ENCODE measurements at regions of chr3 and their contacts with region 1.

Region 1: GRCh38 chr3:10164546-10165393 is at the start of gene IRAK2:
- DNase-seq: peak in 1 of 2 donors; percentile 88
- H3K4me3 ChIP-seq: peak within 1 kb of the TSS; percentile 86 to 91
- H3K27ac ChIP-seq: peak within 1 kb of the TSS; percentile 90 to 93
- H3K4me1 ChIP-seq: peaks cover 2 to 3% of the 10 kb centered on the region in 2 donors
- H3K27me3 ChIP-seq: no peaks in the 10 kb centered on the region
- CTCF ChIP-seq: peak; percentile 93 to 98 (median 95)
- total RNA-seq, gene IRAK2: 1.3 TPM

Region 2: DNA sequence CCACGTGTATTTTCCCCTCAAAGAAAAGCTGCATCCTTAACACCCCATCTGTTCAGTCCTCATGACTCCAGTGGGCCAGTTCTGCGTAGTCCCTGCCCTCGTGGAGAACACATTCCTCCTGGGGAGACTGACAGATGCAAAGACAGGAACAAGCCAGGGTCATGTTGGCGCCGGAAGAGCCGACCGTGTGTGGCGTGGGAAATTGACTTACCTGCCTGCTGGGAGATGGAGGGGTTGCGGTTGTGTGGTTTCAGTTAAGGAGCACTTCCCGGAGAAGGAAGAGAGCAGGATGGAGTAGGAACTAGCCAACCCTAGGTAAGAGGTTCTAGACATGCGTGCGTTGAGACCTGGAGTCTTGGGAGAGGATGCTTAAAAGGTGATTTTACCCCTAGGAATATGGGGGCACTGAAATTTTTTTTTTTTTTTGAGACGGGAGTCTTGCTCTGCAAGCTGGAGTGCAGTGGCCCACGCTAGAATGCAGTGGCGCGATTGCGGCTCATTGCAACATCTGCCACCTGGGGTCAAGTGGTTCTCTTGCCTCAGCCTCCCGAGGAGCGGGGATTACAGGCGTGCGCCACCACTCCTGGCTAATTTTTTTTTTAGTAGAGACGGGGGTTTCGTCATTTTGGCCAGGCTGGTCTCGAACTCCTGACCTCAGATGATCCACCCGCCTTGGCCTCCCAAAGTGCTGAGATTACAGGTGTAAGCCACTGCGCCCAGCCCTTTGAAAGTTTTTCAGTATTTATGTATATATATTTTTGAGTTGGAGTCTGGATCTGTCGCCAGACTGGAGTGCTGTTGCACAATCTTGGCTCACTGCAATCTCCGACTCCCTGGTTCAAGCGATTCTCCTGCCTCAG is 21.8 kb before region 1 on chr3:
- intact Hi-C with region 1: loop called (anchors 2 kb)
- DNase-seq: no peak
- H3K4me3 ChIP-seq: peak overlapping the region; percentile 65 to 91
- H3K27ac ChIP-seq: peak overlapping the region; percentile 90 to 96
- H3K4me1 ChIP-seq: peaks cover 7 to 22% of the 10 kb centered on the region in 2 donors
- H3K27me3 ChIP-seq: no peaks in the 10 kb centered on the region
- CTCF ChIP-seq: no peak

Region 3: DNA sequence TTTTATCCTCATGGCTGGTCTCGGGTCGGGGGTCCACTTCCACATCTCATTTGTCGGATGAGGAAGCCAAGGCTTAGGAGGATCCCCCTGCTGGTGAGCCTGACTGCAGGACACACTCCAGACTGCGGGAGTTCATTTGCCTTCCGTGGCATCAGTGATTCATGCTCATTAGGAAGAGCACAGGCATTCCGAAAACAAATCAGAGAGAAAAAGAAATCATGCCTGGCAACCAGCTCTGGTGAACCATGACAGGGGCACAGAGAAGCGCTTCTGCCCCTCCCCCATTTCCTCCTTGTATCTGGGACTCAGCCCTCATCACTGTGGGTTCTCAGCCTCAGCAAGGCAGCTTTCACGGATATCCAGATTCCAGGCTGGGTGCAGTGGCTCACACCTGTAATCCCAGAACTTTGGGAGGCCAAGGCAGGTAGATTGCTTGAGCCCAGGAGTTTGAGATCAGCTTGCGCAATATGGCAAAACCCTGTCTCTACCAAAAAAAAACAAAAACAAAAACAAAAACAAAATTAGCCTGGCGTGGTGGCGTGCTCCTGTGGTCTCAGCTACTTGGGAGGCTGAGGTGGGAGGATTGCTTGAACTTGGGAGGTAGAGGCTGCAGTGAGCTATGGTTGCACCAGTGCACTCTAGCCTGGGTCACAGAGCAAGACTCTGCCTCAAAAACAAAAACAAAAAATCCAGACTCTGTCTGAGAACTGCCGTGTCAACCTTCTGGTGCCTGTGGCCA is 28.4 kb after region 1 on chr3:
- intact Hi-C with region 1: loop called (anchors 2 kb)
- DNase-seq: peak in 1 of 2 donors; percentile 82
- H3K4me3 ChIP-seq: no peak overlapping the region
- H3K27ac ChIP-seq: peak overlapping the region; percentile 84 to 94
- H3K4me1 ChIP-seq: peaks cover 37 to 74% of the 10 kb centered on the region in 2 donors
- H3K27me3 ChIP-seq: no peaks in the 10 kb centered on the region
- CTCF ChIP-seq: peak in 2 of 3 experiments; percentile 34 to 39

Region 4: GRCh38 chr3:10205451-10206165 is 40.8 kb after region 1 on chr3:
- intact Hi-C with region 1: loop called (anchors 2 kb)
- DNase-seq: peak; percentile 68 to 93
- H3K4me3 ChIP-seq: no peak overlapping the region
- H3K27ac ChIP-seq: peak overlapping the region; percentile 90 to 92
- H3K4me1 ChIP-seq: peaks cover 16 to 35% of the 10 kb centered on the region in 2 donors
- H3K27me3 ChIP-seq: no peaks in the 10 kb centered on the region
- CTCF ChIP-seq: no peak

Region 5: DNA sequence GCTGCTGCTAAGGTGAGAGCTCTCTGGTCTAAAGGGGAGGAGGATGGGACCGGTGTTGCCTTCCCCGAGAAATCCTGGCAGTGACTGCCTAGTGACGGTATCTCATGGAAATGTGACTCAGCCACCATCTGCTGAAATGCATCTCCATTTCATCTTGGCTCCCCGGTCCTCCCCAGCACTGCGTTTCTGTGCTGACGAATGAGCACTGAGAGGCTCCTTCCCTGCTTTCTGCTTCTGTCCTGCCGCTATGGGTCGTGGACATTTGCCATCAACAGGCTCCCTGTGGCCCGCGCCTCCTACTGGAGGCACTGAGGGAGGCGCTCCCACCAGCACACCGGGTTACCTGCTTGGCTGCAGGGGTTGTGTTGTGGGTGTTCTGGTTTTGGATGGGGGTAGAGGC is 169.7 kb after region 1 on chr3:
- intact Hi-C with region 1: no loop called
- DNase-seq: no peak
- H3K4me3 ChIP-seq: no peak overlapping the region
- H3K27ac ChIP-seq: no peak overlapping the region
- H3K4me1 ChIP-seq: no peaks in the 10 kb centered on the region
- H3K27me3 ChIP-seq: no peaks in the 10 kb centered on the region
- CTCF ChIP-seq: no peak

Measured in ascending aorta (tissue), 2 donors.